HAP-1 (cell line): ENCODE measurements at regions of chr1 and their contacts with region 1.

Region 1: GRCh38 chr1:7667625-7668218 is 103.4 kb upstream of the VAMP3 start:
- DNase-seq: peak; percentile 57 to 92
- H3K4me3 ChIP-seq: no peak overlapping the region
- H3K4me1 ChIP-seq: no peaks in the 10 kb centered on the region; the same call in none of the 2 replicates
- H3K27me3 ChIP-seq: no peaks in the 10 kb centered on the region

Region 2: DNA sequence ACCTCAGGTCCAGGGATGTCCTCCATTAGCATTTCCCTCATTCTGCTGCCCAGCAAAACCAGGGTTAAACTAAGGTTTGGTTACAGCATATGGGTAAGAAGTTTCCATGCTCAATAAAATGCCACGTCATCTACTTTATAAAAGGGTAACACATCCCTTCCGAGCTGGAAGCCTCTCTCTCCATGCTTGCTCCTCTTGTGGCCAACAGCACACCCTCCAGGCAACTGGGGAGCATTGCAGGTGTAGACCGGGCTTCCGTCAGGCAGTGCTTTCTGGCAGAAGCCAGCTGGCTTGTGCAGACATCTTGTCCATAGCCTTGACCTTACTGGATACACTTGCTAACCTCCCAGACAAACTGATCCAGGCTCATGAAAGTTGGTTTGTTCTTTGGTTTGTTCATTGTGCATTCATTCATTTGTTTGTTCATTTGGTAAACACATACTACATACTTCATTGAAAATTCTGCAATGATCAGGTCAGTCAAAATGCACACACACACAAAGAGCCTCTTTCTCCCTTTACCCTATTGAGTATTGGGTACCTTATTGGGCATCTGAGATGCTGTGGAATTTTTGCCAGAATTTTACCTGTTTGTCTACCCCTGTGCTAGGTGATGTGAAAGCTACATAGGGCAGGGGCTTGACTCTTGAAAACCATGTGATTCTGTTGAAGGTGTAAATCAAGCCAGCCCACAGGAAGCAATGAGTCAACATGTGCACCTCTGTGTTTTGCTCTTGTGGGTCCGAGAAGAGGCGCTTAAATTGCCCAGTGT is 459.7 kb before region 1 on chr1:
- in situ Hi-C with region 1: no loop called
- DNase-seq: peak; percentile 47 to 73
- H3K4me3 ChIP-seq: no peak overlapping the region
- H3K4me1 ChIP-seq: no peaks in the 10 kb centered on the region
- H3K27me3 ChIP-seq: peaks cover 16% of the 10 kb centered on the region; the same call in 1 of the 2 replicates

Region 3: DNA sequence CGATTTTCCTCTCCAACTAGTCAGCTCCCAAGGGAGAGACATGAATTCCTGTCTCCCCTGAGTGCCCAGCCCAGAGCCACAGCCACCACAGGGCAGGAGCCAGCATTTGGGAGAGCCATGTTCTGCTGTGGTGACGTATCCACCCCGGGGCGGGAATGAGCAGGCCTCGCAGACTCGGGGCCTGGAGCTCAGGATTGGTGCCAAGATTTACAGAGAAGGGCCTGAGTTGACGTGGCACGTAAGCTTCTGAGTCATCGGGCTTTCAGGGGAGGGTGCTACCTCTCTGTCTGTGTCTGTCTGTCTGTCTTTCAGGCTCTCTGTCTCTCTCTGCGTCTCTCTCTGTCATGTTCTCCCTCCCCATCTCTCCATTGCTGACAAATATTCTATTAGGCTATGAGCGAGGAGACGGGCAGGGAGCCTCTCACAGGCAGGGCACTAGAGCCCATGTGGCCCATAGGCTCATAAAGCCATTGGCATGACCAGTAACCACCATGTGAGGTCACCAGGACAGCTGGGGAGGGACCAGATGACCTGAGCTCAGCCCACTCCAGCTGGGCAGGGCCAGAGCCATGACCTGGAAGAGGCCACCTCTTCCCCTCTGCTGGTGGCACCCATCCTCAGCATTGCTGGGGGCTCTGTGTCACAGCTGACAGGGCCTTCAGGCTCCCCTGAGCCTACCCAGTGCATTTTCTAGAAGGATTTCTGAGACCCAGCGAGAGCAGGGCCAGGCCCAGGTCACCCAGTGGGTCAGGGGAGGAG is 196.7 kb before region 1 on chr1:
- in situ Hi-C with region 1: no loop called
- DNase-seq: no peak
- H3K4me3 ChIP-seq: no peak overlapping the region
- H3K4me1 ChIP-seq: no peaks in the 10 kb centered on the region
- H3K27me3 ChIP-seq: no peaks in the 10 kb centered on the region

Region 4: GRCh38 chr1:7752512-7753417 is 85.0 kb after region 1 on chr1:
- in situ Hi-C with region 1: loop called (anchors 5 kb)
- DNase-seq: peak; percentile 75 to 76
- H3K4me3 ChIP-seq: peak overlapping the region; percentile 11; the same call in 1 of the 2 replicates
- H3K4me1 ChIP-seq: peaks cover 8% of the 10 kb centered on the region
- H3K27me3 ChIP-seq: no peaks in the 10 kb centered on the region

Region 5: GRCh38 chr1:7902478-7903085 is 234.9 kb after region 1 on chr1:
- in situ Hi-C with region 1: loop called (anchors 5 kb)
- DNase-seq: peak; percentile 80 to 83
- H3K4me3 ChIP-seq: no peak overlapping the region
- H3K4me1 ChIP-seq: no peaks in the 10 kb centered on the region
- H3K27me3 ChIP-seq: no peaks in the 10 kb centered on the region